WTC11 (cell line): ENCODE measurements at regions of chr19 and their contacts with region 1.

Region 1: GRCh38 chr19:41144403-41144802 is 30.2 kb downstream of the CYP2F1 start:
- DNase-seq: peak; percentile 90
- ATAC-seq: peak; percentile 89
- H3K4me3 Mint-ChIP-seq: no peak overlapping the region
- H3K27ac Mint-ChIP-seq: no peak overlapping the region
- H3K4me1 Mint-ChIP-seq: no peaks in the 10 kb centered on the region
- H3K27me3 Mint-ChIP-seq: no peaks in the 10 kb centered on the region; the same call in 1 of the 2 replicates
- CTCF ChIP-seq: peak; percentile 75

Region 2: DNA sequence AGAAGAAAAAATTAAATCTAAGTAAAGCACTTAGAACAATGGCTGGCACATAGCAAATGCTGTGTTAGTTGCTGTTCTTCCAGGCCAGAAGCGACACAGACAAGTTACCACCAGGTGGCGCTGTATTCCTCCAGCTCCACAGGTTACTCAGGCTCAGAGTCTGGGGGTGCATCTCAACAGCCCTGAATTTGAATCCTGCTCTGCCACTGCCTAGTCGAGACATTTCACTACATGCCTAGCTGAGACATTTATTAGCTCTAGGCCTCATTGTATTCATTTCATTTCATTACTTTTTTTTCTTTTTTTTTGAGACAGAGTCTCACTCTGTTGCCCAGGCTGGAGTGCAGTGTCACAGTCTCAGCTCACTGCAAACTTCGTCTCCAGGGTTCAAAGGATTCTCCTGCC is 169.8 kb before region 1 on chr19:
- CTCF ChIA-PET with region 1: interaction called, 15 read pairs
- POLR2A ChIA-PET with region 1: no interaction called
- DNase-seq: peak; percentile 84
- ATAC-seq: peak; percentile 91
- H3K4me3 Mint-ChIP-seq: no peak overlapping the region
- H3K27ac Mint-ChIP-seq: no peak overlapping the region
- H3K4me1 Mint-ChIP-seq: peaks cover 6% of the 10 kb centered on the region
- H3K27me3 Mint-ChIP-seq: peaks cover 26% of the 10 kb centered on the region
- CTCF ChIP-seq: peak; percentile 95

Region 3: DNA sequence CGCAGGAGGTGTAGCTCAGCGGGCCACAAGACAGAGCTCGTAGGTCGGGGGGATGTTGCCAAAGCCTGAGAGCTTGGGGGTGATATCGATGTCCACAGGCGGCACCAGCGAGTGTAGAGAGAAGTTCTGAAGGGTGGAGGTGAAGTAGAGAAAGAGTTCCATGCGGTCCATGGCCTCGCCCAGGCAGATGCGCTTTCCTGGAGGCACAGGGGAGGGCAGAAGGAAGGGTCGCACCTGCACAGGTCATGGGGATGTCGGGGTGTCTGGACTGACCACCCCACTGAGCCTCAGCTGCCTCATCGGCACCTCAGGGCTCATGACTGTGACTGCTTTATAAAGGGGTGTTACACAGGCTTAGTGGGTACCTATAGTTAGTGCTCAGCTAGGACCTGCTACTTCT is 94.0 kb before region 1 on chr19:
- CTCF ChIA-PET with region 1: no interaction called
- POLR2A ChIA-PET with region 1: no interaction called
- DNase-seq: no peak
- ATAC-seq: no peak
- H3K4me3 Mint-ChIP-seq: no peak overlapping the region
- H3K27ac Mint-ChIP-seq: no peak overlapping the region
- H3K4me1 Mint-ChIP-seq: peaks cover 4% of the 10 kb centered on the region; the same call in 1 of the 2 replicates
- H3K27me3 Mint-ChIP-seq: peaks cover 12% of the 10 kb centered on the region
- CTCF ChIP-seq: no peak

Region 4: DNA sequence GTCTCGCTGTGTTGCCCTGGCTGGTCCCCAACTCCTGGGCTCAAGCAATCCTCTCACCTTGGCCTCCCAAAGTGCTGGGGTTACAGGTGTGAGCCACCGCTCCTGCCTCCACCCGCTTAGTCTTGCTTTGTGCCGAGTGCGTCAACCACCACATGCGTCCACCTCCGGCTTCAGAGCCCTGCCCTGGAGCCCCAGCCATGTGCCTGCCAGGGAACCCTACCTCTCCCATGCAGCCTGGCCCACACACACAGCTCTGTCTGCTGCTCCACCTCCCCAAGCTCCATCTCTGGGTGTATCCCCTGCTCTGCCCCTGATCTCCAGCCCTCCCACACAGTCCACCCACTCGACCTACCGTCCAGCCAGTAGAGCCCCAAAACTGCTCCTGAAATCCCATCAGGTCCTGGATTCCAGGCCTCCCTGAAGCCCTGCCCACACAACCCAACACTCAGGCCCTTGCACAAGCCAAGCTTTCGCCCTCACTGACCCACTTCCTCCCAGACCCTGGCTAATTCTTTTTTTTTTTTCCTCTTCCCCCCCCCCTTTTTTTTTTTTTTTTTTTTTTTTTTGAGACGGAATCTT is 20.6 kb before region 1 on chr19:
- CTCF ChIA-PET with region 1: interaction called, 20 read pairs
- POLR2A ChIA-PET with region 1: no interaction called
- DNase-seq: no peak
- ATAC-seq: no peak
- H3K4me3 Mint-ChIP-seq: no peak overlapping the region
- H3K27ac Mint-ChIP-seq: no peak overlapping the region
- H3K4me1 Mint-ChIP-seq: peaks cover 21% of the 10 kb centered on the region
- H3K27me3 Mint-ChIP-seq: peaks cover 9% of the 10 kb centered on the region
- CTCF ChIP-seq: no peak

Region 5: DNA sequence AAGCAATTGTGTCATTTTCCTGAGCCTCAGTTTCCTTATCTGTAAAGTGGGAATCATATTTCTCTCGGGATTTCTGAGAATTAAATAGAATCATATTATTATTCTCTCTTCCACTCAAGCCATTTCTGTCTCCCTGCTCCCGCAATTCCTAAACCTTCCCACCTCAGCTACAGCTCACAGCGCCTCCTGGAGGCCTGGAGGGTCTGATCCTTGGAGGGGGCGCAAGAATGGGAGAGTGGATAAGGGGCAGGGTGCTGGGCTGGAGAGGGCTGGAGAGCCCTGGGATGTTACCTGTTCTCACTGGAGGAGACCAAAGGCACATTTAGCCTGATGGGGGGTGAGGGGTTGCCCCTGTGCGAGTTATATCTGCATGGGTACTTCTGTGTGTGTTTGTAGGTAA is 17.5 kb after region 1 on chr19:
- CTCF ChIA-PET with region 1: interaction called, 10 read pairs
- POLR2A ChIA-PET with region 1: interaction called, 5 read pairs
- DNase-seq: peak; percentile 73
- ATAC-seq: peak; percentile 88
- H3K4me3 Mint-ChIP-seq: no peak overlapping the region
- H3K27ac Mint-ChIP-seq: no peak overlapping the region
- H3K4me1 Mint-ChIP-seq: peaks cover 5% of the 10 kb centered on the region
- H3K27me3 Mint-ChIP-seq: no peaks in the 10 kb centered on the region; the same call in 1 of the 2 replicates
- CTCF ChIP-seq: peak; percentile 54